GM12878 (cell line): ENCODE measurements at regions of chr1 and their contacts with region 1.

Region 1: DNA sequence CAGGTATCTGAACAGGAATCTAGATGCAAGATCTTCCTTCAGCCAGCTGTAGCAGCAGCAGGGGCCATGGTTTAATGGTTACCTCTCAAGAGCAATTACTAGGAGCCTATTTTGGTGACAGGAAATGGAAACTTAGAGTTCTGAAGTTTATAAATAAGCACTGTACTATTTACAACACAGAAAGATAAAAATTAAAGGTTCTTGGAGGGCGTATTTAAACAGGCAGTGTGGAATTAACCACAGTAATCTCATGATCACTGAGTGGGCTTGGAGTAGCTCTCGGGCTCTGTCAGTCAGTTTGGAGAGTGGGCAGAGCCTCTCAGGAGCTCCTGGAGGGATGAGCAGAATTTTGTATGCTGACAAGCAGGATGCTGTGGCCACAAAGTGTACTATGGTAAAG is 10.2 kb upstream of the FCRL5 start:
- DNase-seq: peak; percentile 63
- ATAC-seq: peak; percentile 83
- H3K4me3 ChIP-seq: peak overlapping the region; percentile 40; the same call in 1 of the 2 replicates
- H3K27ac ChIP-seq: 0 out of 2 replicates have a peak overlapping the region, but pooled peaks have one; percentile 1
- H3K4me1 ChIP-seq: peaks cover 23% of the 10 kb centered on the region
- H3K27me3 ChIP-seq: no peaks in the 10 kb centered on the region
- CTCF ChIP-seq: no peak
- EP300 ChIP-seq: peak; percentile 47 to 83; a peak in 1 of 4 replicates
- POLR2A ChIP-seq: no peak
- RAD21 ChIP-seq: no peak

Region 2: GRCh38 chr1:157170677-157171515 is 391.6 kb before region 1 on chr1:
- CTCF ChIA-PET with region 1: interaction called, 3 read pairs
- POLR2A ChIA-PET with region 1: no interaction called
- RAD21 ChIA-PET with region 1: no interaction called
- SMC1A ChIA-PET with region 1: no interaction called
- in situ Hi-C with region 1: no loop called
- intact Hi-C with region 1: loop called (anchors 10 kb)
- DNase-seq: no peak
- ATAC-seq: no peak; the same call in 2 of the 3 replicates
- H3K4me3 ChIP-seq: no peak overlapping the region
- H3K27ac ChIP-seq: no peak overlapping the region
- H3K4me1 ChIP-seq: peaks cover 43% of the 10 kb centered on the region
- H3K27me3 ChIP-seq: no peaks in the 10 kb centered on the region
- CTCF ChIP-seq: peak; percentile 49 to 67 (median 59)
- EP300 ChIP-seq: no peak
- POLR2A ChIP-seq: no peak
- RAD21 ChIP-seq: peak; percentile 35

Region 3: GRCh38 chr1:157512036-157512969 is 50.2 kb before region 1 on chr1:
- CTCF ChIA-PET with region 1: interaction called, 33 read pairs
- POLR2A ChIA-PET with region 1: interaction called, 40 read pairs
- RAD21 ChIA-PET with region 1: interaction called, 179 read pairs
- SMC1A ChIA-PET with region 1: interaction called, 157 read pairs
- in situ Hi-C with region 1: no loop called
- intact Hi-C with region 1: loop called (anchors 5 kb)
- DNase-seq: peak; percentile 68
- ATAC-seq: peak; percentile 74
- H3K4me3 ChIP-seq: no peak overlapping the region
- H3K27ac ChIP-seq: peak overlapping the region; percentile 88
- H3K4me1 ChIP-seq: peaks cover 50% of the 10 kb centered on the region
- H3K27me3 ChIP-seq: no peaks in the 10 kb centered on the region
- CTCF ChIP-seq: no peak
- EP300 ChIP-seq: peak; percentile 89 to 95
- POLR2A ChIP-seq: no peak
- RAD21 ChIP-seq: no peak

Region 4: GRCh38 chr1:157542676-157543075 is 19.8 kb before region 1 on chr1:
- CTCF ChIA-PET with region 1: interaction called, 6 read pairs
- POLR2A ChIA-PET with region 1: interaction called, 3 read pairs
- RAD21 ChIA-PET with region 1: interaction called, 3 read pairs
- SMC1A ChIA-PET with region 1: interaction called, 11 read pairs
- in situ Hi-C with region 1: no loop called
- intact Hi-C with region 1: no loop called
- DNase-seq: no peak
- ATAC-seq: no peak
- H3K4me3 ChIP-seq: no peak overlapping the region
- H3K27ac ChIP-seq: no peak overlapping the region
- H3K4me1 ChIP-seq: peaks cover 6% of the 10 kb centered on the region; the same call in 1 of the 2 replicates
- H3K27me3 ChIP-seq: 0 out of 4 replicates have a peak, but pooled peaks cover 0 to 3% of the 10 kb centered on the region in 2 experiments
- CTCF ChIP-seq: no peak
- EP300 ChIP-seq: no peak
- POLR2A ChIP-seq: no peak
- RAD21 ChIP-seq: no peak

Region 5: DNA sequence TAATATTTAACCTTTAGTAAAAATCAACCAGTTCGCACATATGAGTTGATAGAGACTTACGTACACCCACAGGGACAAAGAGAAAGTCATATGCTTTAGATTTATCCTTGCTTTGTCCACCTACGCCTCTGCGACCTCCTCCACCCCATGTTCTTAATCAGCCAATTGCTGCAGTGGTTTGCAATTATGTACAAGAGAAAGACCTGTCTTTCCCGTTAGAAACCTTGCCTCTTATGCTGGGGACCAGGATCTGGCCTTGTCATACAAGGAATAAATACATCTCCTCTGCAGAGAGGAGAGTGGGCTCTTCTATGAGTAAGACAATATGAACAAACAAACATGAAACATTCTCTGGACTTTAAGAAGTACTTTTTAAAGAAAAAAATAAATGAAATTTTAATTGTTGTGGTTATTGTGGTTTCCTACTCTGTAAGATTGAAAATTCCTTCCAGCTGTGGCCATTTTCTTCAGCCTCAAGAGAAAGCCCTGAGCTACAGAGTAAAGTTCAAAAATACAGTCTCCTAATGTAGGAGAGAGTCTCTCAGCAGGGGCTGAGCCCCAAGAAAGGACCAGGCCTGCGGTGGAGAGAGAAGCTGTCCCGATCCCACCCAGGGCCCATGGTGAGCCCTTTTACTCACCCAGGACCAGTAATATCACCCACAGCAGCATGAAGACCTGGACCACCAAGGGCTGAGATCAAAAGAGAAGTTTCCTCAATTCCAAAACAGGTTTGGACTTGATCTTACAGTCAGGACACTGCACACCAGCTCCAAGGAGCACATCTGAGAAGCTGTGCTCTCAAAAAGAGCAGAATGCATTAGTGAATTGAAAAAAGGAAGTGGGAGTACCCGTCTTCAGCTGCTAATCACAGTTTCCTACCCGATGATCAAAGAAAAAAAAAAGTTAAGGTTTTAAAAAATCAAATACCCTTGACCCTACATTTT is 10.5 kb before region 1 on chr1 and contains the start of gene FCRL5:
- CTCF ChIA-PET with region 1: interaction called, 102 read pairs
- POLR2A ChIA-PET with region 1: interaction called, 41 read pairs
- RAD21 ChIA-PET with region 1: interaction called, 73 read pairs
- SMC1A ChIA-PET with region 1: interaction called, 110 read pairs
- in situ Hi-C with region 1: no loop called
- intact Hi-C with region 1: no loop called
- DNase-seq: peak; percentile 33
- ATAC-seq: peak; percentile 90
- H3K4me3 ChIP-seq: peak within 1 kb of the TSS; percentile 62
- H3K27ac ChIP-seq: peak within 1 kb of the TSS; percentile 34
- H3K4me1 ChIP-seq: peaks cover 15% of the 10 kb centered on the region
- H3K27me3 ChIP-seq: no peaks in the 10 kb centered on the region; a peak in 1 of 4 replicates
- CTCF ChIP-seq: no peak
- EP300 ChIP-seq: peak in 1 of 2 experiments; percentile 75; a peak in 2 of 4 replicates
- POLR2A ChIP-seq: no peak
- RAD21 ChIP-seq: no peak
- polyA plus RNA-seq, gene FCRL5: 2.6 to 5.7 TPM

Region 6: DNA sequence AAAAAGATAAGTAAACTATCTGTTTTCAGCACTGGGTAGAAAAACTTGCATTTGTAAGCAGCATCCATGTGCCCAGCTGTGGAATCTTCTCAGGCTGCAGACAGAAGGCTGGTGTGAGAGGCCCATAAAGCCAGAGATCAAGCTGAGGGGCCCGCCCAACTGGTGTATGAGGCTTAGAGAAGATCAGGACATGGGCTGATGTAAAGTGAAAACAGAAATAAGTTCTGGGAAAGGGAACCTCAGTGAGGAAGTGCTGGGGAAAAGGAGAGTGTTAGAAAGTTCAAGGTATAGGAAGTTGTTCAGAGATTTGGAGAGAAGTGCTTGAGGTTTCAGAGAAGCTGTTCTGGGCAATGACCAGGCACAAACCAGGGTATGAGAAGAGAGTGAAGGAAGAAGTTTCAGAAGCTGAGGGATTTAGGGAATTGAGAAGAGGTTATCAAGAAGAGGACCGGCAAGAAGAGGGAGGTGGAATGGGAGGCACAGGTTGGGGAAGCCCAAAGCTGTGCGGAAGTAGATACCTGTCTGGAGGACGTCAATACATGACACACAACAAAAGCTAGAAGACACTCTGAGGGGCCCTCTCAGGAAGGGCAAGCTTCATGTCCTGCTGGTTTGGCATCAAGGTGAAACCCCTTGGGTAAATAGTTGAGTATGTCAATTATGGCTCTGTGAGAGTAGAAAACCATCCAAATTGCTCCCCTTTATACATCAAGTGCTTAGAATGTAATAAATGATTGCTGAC is 281.7 kb after region 1 on chr1:
- CTCF ChIA-PET with region 1: no interaction called
- POLR2A ChIA-PET with region 1: no interaction called
- RAD21 ChIA-PET with region 1: no interaction called
- SMC1A ChIA-PET with region 1: no interaction called
- in situ Hi-C with region 1: no loop called
- intact Hi-C with region 1: no loop called
- DNase-seq: no peak
- ATAC-seq: no peak
- H3K4me3 ChIP-seq: no peak overlapping the region
- H3K27ac ChIP-seq: no peak overlapping the region
- H3K4me1 ChIP-seq: peaks cover 22% of the 10 kb centered on the region
- H3K27me3 ChIP-seq: no peaks in the 10 kb centered on the region
- CTCF ChIP-seq: no peak
- EP300 ChIP-seq: no peak
- POLR2A ChIP-seq: no peak
- RAD21 ChIP-seq: no peak